Heart left ventricle (tissue), 16 donors: ENCODE measurements at regions of chr13 and their contacts with region 1.

Region 1: DNA sequence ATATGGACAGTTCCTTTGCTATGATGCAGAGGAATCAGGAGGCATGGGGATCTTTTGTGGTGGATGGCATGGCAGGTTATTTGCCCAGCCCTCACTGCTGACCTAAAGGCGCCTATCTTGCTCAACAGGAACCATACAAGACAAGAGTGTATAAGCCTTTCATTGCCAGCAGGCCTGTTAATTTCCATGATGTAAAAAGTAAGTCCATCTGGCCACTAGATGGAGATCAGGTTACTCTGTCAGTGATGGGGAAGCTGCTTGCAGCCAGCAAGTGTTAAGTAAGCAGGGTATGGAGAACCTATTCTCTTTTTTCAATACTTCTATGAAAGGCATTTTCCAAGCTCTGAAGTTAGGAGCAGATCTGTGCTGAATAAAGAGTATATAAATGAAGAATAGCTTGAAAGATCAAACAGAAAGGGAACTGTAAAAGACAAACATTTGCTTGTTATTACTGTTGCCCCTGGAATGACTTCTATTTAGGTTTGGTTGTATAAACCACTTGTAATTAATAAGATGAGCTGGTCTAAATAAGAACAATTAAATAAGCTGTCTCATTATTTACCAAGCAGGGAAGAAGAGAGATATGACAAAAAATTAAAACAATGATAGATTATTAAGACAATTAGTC is 210.9 kb downstream of the RGCC start:
- DNase-seq: peak in 4 of 5 donors; percentile 44 to 66 (median 56)
- ATAC-seq: peak; percentile 57 to 98 (median 96)
- H3K4me3 ChIP-seq: no peak overlapping the region
- H3K27ac ChIP-seq: no peak overlapping the region
- H3K4me1 ChIP-seq: peaks cover 0 to 7% (median 1%) of the 10 kb centered on the region in 12 donors
- H3K27me3 ChIP-seq: no peaks in the 10 kb centered on the region
- CTCF ChIP-seq: peak; percentile 64 to 85 (median 79)
- POLR2A ChIP-seq: no peak

Region 2: GRCh38 chr13:41652727-41653361 is 15.4 kb before region 1 on chr13:
- intact Hi-C with region 1: no loop called
- DNase-seq: peak in 1 of 5 donors; percentile 25
- ATAC-seq: peak in 2 of 4 donors; percentile 25 to 35
- H3K4me3 ChIP-seq: no peak overlapping the region
- H3K27ac ChIP-seq: peak overlapping the region in 6 of 12 donors; percentile 2 to 35 (median 19)
- H3K4me1 ChIP-seq: peaks cover 0 to 26% (median 12%) of the 10 kb centered on the region in 12 donors
- H3K27me3 ChIP-seq: no peaks in the 10 kb centered on the region
- CTCF ChIP-seq: peak; percentile 32 to 76 (median 66)
- POLR2A ChIP-seq: no peak

Region 3: GRCh38 chr13:41722684-41723535 is 54.7 kb after region 1 on chr13:
- intact Hi-C with region 1: no loop called
- DNase-seq: no peak
- ATAC-seq: no peak
- H3K4me3 ChIP-seq: no peak overlapping the region
- H3K27ac ChIP-seq: no peak overlapping the region
- H3K4me1 ChIP-seq: no peaks in the 10 kb centered on the region
- H3K27me3 ChIP-seq: no peaks in the 10 kb centered on the region
- CTCF ChIP-seq: no peak
- POLR2A ChIP-seq: no peak

Region 4: GRCh38 chr13:41848435-41849255 is 180.4 kb after region 1 on chr13:
- intact Hi-C with region 1: loop called in 2 of 10 experiments (anchors 5 to 10 kb)
- DNase-seq: no peak
- ATAC-seq: peak; percentile 39 to 74 (median 71)
- H3K4me3 ChIP-seq: no peak overlapping the region
- H3K27ac ChIP-seq: peak overlapping the region in 7 of 12 donors; percentile 4 to 56 (median 24)
- H3K4me1 ChIP-seq: peaks cover 0 to 19% (median 5%) of the 10 kb centered on the region in 12 donors
- H3K27me3 ChIP-seq: no peaks in the 10 kb centered on the region
- CTCF ChIP-seq: peak in 6 of 12 donors; percentile 19 to 46 (median 32)
- POLR2A ChIP-seq: no peak

Region 5: DNA sequence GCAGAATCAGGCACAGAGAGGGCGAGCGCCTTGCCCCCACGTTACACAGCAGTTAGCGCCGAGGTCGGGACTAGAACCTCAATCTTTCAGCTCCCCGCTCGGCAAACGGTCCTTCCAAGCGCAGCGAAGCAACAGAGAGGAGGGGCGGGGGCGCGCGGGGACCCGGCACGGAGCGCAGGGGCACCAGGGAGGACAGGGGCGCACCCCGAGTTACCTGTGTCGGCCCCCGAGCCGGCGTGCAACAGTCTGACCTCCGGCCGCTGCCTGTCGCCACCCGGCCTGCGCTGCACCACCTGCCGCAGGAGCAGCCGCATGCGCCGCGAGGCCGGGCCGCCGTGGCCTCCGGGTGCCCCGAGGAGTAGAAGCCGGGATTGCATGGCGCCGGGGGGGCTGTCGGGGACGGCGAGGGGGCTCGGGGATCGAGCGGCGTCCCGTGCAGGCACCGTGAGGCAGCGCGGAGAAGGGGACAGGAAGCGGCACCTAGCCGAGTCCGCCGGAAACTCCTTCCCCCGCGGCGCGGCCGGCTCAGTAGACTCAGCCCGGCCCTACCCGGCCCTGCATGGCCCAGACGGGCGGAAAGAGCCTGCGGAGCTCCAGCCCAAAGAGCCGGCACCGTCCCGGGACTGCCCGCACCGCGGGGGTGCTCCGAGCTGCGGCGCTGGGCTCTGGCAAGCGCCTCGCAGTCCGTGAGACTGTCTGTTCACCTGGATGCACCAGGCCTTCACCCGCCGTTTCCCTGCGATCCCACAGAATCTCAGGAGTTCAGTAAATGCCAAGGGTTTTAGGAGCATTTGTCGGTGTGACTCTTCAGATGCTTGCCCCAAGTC is 292.6 kb after region 1 on chr13 and contains the start of gene VWA8:
- intact Hi-C with region 1: loop called in 2 of 10 experiments (anchors 5 to 10 kb)
- DNase-seq: peak; percentile 84 to 92 (median 87)
- ATAC-seq: peak; percentile 75 to 97 (median 97)
- H3K4me3 ChIP-seq: peak within 1 kb of the TSS; percentile 53 to 95 (median 84)
- H3K27ac ChIP-seq: peak within 1 kb of the TSS; percentile 75 to 95 (median 90)
- H3K4me1 ChIP-seq: peaks cover 0 to 38% (median 10%) of the 10 kb centered on the region in 12 donors
- H3K27me3 ChIP-seq: no peaks in the 10 kb centered on the region
- CTCF ChIP-seq: peak in 1 of 12 donors; percentile 19
- POLR2A ChIP-seq: peak in 1 of 2 donors; percentile 20
- total RNA-seq, gene VWA8: 33.4 to 64.1 (median 50.9) TPM

Region 6: GRCh38 chr13:42048682-42049453 is 380.6 kb after region 1 on chr13:
- intact Hi-C with region 1: loop called in 5 of 10 experiments (anchors 2 to 10 kb)
- DNase-seq: peak; percentile 88 to 91 (median 89)
- ATAC-seq: peak; percentile 80 to 91 (median 88)
- H3K4me3 ChIP-seq: peak overlapping the region; percentile 70 to 96 (median 89)
- H3K27ac ChIP-seq: peak overlapping the region; percentile 89 to 96 (median 90)
- H3K4me1 ChIP-seq: peaks cover 0 to 28% (median 17%) of the 10 kb centered on the region in 12 donors
- H3K27me3 ChIP-seq: no peaks in the 10 kb centered on the region
- CTCF ChIP-seq: peak in 7 of 12 donors; percentile 9 to 53 (median 26)
- POLR2A ChIP-seq: peak in 1 of 2 donors; percentile 39